ENCODE measurements at regions of chr10 and their contacts with region 1.

Region 1: DNA sequence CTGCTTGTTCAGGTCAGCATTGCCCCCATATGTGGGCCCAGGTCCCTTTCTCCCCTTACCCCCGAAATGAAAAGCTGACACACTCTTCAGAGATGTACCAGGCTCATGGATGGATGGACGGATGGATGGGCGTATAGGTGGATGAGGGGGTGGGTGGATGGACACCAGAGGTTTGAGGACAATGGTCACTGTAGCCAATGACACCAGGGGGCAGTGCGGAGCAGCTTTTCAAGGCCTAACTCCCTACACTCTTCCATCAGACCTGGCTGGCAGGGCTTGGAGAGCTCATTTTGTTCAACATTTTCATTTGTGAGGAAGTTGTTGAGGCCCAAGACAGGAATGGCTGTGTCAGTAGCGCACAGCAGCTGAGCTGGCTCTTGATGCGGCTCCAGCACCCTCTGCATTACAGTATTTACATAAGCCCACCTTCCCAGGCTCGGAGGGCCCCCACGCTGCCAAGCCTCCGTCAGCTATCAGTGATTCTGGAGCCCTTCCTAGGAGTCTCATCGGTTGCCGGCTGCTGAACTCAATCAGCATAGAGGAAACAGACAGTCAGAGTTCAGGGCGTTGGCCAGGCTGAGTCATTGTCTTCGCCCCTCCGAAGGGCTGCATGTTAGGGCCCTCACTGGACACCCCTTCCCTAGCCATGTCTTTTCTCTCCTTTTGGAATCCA is 11.6 kb upstream of the FFAR4 start:
- DNase-seq: peak; percentile 89

Region 2: DNA sequence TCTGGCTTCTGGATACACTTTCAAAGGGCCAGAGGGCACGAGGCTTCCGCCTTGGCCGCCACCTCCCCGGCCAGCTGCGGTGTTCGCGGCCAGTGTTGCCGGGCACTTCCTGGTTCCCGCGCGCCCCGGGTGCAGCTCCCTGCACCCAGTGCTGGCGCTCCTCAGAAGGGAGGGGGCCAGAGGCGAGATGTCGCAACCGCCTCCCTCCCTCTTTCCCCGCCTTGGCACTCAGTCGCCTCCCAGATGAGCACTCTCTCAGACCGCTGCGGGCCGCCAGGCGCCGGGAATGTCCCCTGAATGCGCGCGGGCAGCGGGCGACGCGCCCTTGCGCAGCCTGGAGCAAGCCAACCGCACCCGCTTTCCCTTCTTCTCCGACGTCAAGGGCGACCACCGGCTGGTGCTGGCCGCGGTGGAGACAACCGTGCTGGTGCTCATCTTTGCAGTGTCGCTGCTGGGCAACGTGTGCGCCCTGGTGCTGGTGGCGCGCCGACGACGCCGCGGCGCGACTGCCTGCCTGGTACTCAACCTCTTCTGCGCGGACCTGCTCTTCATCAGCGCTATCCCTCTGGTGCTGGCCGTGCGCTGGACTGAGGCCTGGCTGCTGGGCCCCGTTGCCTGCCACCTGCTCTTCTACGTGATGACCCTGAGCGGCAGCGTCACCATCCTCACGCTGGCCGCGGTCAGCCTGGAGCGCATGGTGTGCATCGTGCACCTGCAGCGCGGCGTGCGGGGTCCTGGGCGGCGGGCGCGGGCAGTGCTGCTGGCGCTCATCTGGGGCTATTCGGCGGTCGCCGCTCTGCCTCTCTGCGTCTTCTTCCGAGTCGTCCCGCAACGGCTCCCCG is 11.8 kb after region 1 on chr10 and contains the start of gene FFAR4:
- CTCF ChIA-PET with region 1: interaction called, 10 read pairs
- POLR2A ChIA-PET with region 1: no interaction called
- DNase-seq: no peak

Region 3: DNA sequence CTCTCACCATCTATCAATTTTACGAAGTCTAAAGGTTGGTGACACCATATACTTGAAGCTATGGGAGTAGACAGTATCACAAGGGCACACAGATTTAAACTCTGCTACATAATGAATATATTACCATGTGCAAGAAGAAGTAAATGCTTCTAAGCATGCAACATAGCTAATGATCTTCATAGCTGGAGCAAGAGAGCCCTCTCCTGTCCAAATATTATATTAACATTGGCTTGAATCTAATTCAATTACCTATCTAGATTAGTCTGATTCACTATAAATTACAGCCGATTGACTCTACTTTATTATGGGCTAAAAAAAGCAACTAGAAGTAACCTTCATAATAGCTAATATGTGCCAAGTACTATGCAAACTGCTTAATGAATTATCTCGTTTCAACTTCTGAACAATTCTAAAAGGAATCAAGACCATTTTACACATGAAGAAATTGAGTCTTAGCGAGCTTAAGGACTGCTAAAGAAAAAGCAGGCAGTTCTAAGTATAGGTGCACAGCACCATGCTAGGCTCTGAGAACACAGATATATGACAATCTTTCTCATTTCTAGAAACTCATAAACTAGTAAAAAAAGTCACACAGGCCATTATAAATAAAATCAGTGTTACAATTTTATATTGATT is 125.6 kb after region 1 on chr10:
- CTCF ChIA-PET with region 1: interaction called, 15 read pairs
- POLR2A ChIA-PET with region 1: interaction called, 8 read pairs
- DNase-seq: peak; percentile 33